ENCODE measurements at regions of chr15 and their contacts with region 1.

Region 1: GRCh38 chr15:85730001-85730820 is 64.5 kb downstream of the KLHL25 start:
- DNase-seq: peak; percentile 57
- ATAC-seq: peak; percentile 79
- H3K4me3 Mint-ChIP-seq: no peak overlapping the region
- H3K27ac Mint-ChIP-seq: peak overlapping the region; percentile 88
- H3K4me1 Mint-ChIP-seq: peaks cover 27% of the 10 kb centered on the region
- H3K27me3 Mint-ChIP-seq: no peaks in the 10 kb centered on the region

Region 2: DNA sequence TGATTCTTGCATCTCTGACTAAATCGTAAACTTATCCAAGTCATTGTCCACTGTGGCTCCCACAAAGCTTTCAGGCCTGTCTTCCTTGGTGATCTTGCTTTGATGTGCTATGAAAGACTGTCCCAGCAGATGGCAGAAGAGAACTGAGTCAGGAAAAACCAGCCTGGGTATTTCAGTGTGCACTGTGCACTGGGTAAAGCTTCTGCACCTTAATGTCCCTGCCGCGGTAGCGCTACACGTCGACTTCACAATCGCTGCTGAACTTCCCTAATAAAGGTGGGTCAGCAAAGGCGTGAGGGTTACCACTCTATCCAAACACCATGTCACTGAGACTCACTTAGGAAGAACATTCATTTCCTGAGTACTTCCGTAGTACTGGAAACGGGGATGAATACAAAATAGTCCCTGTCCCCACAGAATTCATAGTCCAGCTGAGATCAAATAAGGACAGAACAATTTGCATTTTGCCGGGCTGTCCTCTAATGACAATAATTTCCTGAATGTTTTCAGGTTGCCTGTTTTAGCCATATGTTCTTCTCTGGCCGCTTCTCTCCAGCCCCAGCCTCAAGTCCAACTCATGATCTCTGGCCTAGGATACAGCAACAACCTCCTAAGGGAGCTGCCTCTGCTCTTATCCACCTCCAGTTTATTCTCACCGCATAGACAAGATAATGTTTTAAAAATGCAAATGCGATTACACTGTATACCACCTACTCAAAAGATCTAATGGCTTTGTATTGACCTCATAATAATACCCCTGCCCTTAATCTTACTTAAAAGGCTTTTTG is 433.4 kb before region 1 on chr15:
- CTCF ChIA-PET with region 1: interaction called, 3 read pairs
- POLR2A ChIA-PET with region 1: no interaction called
- intact Hi-C with region 1: loop called in 1 of 2 experiments (anchors 10 kb)
- DNase-seq: peak; percentile 79
- ATAC-seq: peak; percentile 100
- H3K4me3 Mint-ChIP-seq: no peak overlapping the region
- H3K27ac Mint-ChIP-seq: peak overlapping the region; percentile 38
- H3K4me1 Mint-ChIP-seq: peaks cover 11% of the 10 kb centered on the region
- H3K27me3 Mint-ChIP-seq: peaks cover 1% of the 10 kb centered on the region

Region 3: DNA sequence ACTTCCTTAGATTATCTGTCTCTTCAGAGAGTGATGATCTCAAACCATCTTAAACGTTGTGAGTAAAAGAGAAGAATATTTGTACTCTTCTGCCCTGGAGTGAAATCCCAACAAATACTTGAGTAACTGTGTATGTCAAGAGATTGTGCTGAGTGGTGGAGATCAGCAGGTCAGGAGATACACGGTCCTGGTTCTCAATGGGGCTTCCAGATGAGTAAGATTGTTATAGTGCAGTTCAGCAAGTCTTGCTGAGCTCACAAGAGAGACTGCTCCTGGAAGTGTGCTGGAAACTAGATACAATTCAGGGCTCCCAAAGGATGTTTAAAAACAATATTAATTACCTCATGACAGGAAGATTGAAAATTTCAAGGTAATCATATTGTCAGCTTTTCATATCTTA is 165.5 kb before region 1 on chr15:
- CTCF ChIA-PET with region 1: no interaction called
- POLR2A ChIA-PET with region 1: no interaction called
- intact Hi-C with region 1: no loop called
- DNase-seq: no peak
- ATAC-seq: no peak
- H3K4me3 Mint-ChIP-seq: no peak overlapping the region
- H3K27ac Mint-ChIP-seq: no peak overlapping the region
- H3K4me1 Mint-ChIP-seq: peaks cover 15% of the 10 kb centered on the region
- H3K27me3 Mint-ChIP-seq: no peaks in the 10 kb centered on the region

Region 4: DNA sequence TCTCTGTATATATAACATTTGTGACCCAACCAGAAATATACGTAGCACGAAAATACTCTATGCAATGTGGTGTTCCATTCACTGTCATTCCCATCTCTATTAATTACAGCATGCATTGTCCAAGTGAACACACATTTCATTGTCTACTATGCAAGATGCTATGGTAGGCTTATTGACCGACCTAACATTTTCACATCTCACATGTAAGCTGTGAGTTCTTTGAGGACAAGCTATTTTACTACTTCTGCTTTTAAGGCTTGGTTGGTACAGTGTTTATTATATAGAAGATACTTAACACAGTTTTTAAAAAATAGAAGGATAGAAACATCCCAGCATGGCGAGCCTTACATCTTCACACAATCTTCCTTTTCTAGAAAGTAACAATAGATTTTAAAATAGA is 99.9 kb before region 1 on chr15:
- CTCF ChIA-PET with region 1: no interaction called
- POLR2A ChIA-PET with region 1: no interaction called
- intact Hi-C with region 1: no loop called
- DNase-seq: no peak
- ATAC-seq: no peak
- H3K4me3 Mint-ChIP-seq: no peak overlapping the region
- H3K27ac Mint-ChIP-seq: peak overlapping the region; percentile 53
- H3K4me1 Mint-ChIP-seq: peaks cover 36% of the 10 kb centered on the region
- H3K27me3 Mint-ChIP-seq: no peaks in the 10 kb centered on the region

Region 5: DNA sequence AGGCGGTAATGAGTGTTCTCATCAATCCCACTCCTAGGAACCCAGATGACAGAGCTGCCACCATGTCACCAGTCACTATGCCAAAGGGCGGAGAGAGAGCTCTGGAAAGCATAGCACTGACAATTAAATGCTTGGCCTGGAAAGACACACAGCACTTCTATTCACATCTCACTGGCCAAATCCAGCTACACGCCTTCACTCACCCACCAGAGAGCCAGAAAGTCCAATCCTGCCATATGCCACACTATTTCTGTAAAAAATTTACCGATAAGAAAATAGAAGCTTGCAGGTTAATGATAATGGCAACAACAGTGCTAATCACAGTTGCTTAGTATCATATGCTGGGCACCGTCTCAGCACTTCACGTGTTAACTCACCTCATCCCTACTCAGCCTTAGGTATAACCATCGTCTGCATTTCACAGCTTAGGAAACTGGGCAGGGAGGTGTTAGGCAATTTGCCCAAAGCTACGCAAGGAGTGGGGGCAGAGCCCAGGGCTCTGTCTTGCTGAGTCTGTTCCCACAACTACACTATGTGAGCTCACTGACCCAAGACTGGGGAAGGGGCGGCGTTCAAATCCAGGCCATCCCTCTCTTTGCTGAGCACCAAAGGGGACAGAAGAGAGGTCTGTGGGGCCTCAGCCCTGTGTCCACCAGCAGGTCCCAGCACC is 48.0 kb after region 1 on chr15:
- CTCF ChIA-PET with region 1: no interaction called
- POLR2A ChIA-PET with region 1: interaction called, 10 read pairs
- intact Hi-C with region 1: no loop called
- DNase-seq: no peak
- ATAC-seq: no peak
- H3K4me3 Mint-ChIP-seq: no peak overlapping the region
- H3K27ac Mint-ChIP-seq: no peak overlapping the region
- H3K4me1 Mint-ChIP-seq: peaks cover 22% of the 10 kb centered on the region
- H3K27me3 Mint-ChIP-seq: no peaks in the 10 kb centered on the region

Region 6: GRCh38 chr15:85831415-85832113 is 101.4 kb after region 1 on chr15:
- CTCF ChIA-PET with region 1: interaction called, 9 read pairs
- POLR2A ChIA-PET with region 1: no interaction called
- intact Hi-C with region 1: loop called (anchors 2 kb)
- DNase-seq: peak; percentile 66
- ATAC-seq: peak; percentile 74
- H3K4me3 Mint-ChIP-seq: no peak overlapping the region
- H3K27ac Mint-ChIP-seq: no peak overlapping the region
- H3K4me1 Mint-ChIP-seq: no peaks in the 10 kb centered on the region
- H3K27me3 Mint-ChIP-seq: no peaks in the 10 kb centered on the region